ENCODE measurements at regions of chr7 and their contacts with region 1.

Region 1: GRCh38 chr7:150390205-150390604 is 11.1 kb downstream of the ZNF775 start:
- DNase-seq: peak; percentile 71
- ATAC-seq: peak; percentile 99
- H3K4me3 ChIP-seq: no peak overlapping the region
- H3K27ac ChIP-seq: no peak overlapping the region
- H3K4me1 ChIP-seq: peaks cover 9% of the 10 kb centered on the region
- H3K27me3 ChIP-seq: no peaks in the 10 kb centered on the region
- CTCF ChIP-seq: no peak

Region 2: DNA sequence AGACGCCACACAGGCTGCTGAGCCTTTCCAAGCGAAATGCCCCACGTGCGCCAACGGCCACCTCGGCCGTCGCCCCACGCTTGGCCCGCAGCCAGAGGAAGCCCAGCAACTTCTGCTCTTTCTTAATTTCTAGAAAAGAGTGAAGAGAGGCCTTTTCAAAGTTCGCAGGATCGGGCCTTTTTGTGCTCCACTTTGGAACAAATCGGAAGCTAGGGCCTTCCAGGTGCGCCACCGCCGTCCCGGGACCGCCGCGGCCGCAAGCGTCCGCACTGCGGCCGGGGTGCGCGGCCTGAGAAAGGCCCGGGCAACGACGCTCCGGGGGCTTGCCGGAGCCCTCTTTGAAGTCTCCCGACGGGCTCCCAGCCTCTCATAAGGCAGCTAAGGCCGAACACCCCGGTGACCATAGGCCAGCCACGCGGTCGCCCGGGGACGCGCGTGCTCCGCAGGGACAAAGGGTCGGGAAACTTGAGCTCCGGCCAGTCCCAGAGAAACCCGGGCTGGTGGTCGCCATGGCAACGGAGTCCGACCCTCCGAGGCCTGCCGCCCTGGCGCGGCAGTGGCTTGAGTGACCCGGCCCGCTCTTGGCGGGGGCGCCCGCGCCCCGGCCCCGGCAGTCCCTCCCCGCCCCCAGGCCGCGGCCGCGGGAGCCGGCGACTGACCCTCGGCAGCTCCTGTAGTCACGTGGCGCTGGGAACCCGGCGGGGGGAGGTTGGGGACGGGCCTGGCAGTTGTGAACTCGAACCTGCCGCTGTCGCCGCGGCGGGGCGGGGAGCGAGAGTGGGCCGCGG is 21.9 kb before region 1 on chr7 and contains the start of gene REPIN1:
- CTCF ChIA-PET with region 1: no interaction called
- POLR2A ChIA-PET with region 1: no interaction called
- intact Hi-C with region 1: no loop called
- DNase-seq: peak; percentile 80
- ATAC-seq: peak; percentile 54
- H3K4me3 ChIP-seq: peak within 1 kb of the TSS; percentile 87
- H3K27ac ChIP-seq: peak within 1 kb of the TSS; percentile 83
- H3K4me1 ChIP-seq: peaks cover 30% of the 10 kb centered on the region
- H3K27me3 ChIP-seq: no peaks in the 10 kb centered on the region
- CTCF ChIP-seq: no peak
- total RNA-seq, gene REPIN1: 124 and 153 TPM in 2 replicates

Region 3: GRCh38 chr7:150404805-150405583 is 14.8 kb after region 1 on chr7:
- CTCF ChIA-PET with region 1: interaction called, 3 read pairs
- POLR2A ChIA-PET with region 1: no interaction called
- intact Hi-C with region 1: loop called (anchors 2 kb)
- DNase-seq: peak; percentile 73
- ATAC-seq: peak; percentile 85
- H3K4me3 ChIP-seq: peak overlapping the region; percentile 78
- H3K27ac ChIP-seq: no peak overlapping the region
- H3K4me1 ChIP-seq: peaks cover 18% of the 10 kb centered on the region
- H3K27me3 ChIP-seq: no peaks in the 10 kb centered on the region
- CTCF ChIP-seq: peak; percentile 42

Measured in PC-3 (cell line).